Left ventricle myocardium inferior (tissue), 1 donor: ENCODE measurements at regions of chr6 and their contacts with region 1.

Region 1: DNA sequence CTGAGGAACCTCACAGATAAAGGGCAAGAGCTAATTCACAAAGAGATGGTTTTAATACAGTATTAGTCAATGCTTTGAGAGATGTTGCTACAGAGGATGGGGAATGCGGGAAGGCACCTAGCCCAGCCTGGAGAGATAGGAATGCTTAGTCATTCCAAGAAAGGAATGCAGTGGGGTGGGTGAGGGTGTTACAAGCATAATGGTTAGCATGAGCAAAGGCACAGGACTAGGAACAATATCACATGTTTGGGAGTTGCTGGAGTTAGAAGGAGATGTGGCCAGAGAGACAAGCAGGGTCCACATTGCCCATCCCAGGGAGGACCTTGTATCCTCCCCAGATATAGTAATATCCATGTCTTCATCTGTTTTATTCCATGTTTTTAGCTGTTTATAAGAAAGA is 107.0 kb upstream of the OGFRL1 start:
- DNase-seq: no peak
- H3K4me3 ChIP-seq: no peak overlapping the region
- H3K27ac ChIP-seq: no peak overlapping the region
- H3K4me1 ChIP-seq: no peaks in the 10 kb centered on the region
- H3K27me3 ChIP-seq: no peaks in the 10 kb centered on the region
- CTCF ChIP-seq: no peak

Region 2: DNA sequence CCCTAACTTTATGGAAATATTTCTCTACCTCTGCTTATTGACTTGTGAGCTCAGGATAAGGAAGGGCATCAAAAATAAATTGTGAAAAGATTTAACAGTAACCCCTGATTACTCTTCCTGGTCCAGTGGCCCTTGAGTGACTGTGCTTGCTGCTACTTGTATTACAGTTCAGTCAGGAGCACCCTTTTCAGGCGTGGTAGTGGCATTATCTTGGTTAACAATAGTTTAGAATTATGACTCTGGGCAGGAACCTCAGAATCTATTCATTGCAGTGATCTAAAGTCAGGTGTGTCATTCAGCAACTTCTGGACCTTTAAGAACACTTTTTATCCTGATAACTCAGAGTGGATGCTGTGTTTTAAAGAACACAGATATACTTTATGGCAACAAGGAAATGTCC is 724.8 kb before region 1 on chr6:
- intact Hi-C with region 1: no loop called
- DNase-seq: no peak
- H3K4me3 ChIP-seq: no peak overlapping the region
- H3K27ac ChIP-seq: no peak overlapping the region
- H3K4me1 ChIP-seq: no peaks in the 10 kb centered on the region
- H3K27me3 ChIP-seq: no peaks in the 10 kb centered on the region
- CTCF ChIP-seq: no peak

Region 3: GRCh38 chr6:71137973-71138372 is 43.6 kb before region 1 on chr6:
- intact Hi-C with region 1: loop called (anchors 2 kb)
- DNase-seq: no peak
- H3K4me3 ChIP-seq: no peak overlapping the region
- H3K27ac ChIP-seq: no peak overlapping the region
- H3K4me1 ChIP-seq: no peaks in the 10 kb centered on the region
- H3K27me3 ChIP-seq: no peaks in the 10 kb centered on the region
- CTCF ChIP-seq: no peak

Region 4: GRCh38 chr6:71228461-71229041 is 47.0 kb after region 1 on chr6:
- intact Hi-C with region 1: no loop called
- DNase-seq: no peak
- H3K4me3 ChIP-seq: no peak overlapping the region
- H3K27ac ChIP-seq: no peak overlapping the region
- H3K4me1 ChIP-seq: no peaks in the 10 kb centered on the region
- H3K27me3 ChIP-seq: no peaks in the 10 kb centered on the region
- CTCF ChIP-seq: no peak